ENCODE measurements at regions of chr5 and their contacts with region 1.

Region 1: DNA sequence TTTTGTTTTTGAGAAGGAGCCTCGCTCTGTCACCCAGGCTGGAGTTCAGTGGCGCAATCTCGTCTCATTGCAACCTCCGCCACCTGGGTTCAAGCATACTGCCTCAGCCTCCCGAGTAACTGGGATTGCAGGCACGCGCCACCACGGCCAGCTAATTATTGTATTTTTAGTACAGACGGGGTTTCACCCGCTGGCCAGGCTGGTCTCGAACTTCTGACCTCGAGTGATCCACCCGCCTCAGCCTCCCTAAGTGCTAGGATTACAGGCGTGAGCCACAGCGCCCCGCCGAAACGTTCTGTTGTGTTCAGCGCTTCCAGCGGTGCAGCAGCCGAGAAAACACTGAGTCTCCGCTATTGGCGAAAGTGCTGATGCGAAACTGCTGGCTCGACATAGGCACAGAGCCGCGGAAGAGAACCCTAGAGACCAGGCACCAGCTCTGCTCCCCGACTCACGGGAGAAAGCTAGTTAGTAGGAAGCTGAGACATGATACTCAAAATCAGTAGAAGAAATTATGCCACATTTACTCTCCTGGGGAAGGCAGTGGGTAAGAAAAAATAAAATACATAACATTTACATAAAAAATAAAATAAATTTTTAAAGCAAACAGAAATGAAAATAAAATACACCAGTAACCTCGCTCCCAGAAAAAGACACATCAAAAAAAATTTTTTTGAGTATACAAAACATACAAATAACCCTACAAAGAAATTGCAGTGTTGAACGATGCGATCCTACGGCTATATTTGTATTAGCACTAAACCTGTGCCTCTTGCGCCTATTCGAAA is 31.6 kb downstream of the ANXA2R start:
- DNase-seq: peak; percentile 86
- H3K4me3 Mint-ChIP-seq: peak overlapping the region; percentile 90
- H3K27ac Mint-ChIP-seq: peak overlapping the region; percentile 96
- H3K4me1 Mint-ChIP-seq: peaks cover 41% of the 10 kb centered on the region
- H3K27me3 Mint-ChIP-seq: no peaks in the 10 kb centered on the region

Region 2: DNA sequence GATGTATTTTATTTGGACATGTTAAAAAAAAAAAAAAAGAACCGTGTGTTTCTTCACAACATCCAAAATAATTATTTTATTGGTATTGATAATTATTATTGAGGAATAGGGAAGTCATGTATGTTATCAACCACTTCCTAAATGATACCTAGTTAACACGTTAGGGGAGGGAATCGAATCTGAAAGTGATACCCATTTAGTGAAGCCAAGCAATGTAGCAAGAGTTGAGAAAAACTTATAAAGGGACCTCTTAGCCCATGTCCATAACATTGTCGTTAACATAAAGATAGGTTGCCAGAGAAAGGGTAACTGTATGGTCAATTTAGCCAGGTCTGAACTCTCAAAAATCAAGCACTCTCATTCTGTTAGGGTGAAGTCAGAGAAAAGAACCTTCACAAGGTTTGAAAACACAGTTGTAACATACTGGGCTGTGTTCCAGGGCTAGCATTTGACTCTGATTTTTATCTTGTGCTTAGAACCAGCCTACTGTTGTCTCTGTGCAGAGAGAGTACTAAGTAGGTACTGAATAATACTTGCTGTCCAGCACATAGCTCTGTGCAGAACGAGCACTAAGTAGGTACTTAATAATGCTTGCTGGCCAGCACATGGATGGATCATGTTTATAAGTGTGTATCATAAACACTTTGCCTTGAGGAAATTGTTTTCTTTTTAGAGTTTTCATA is 524.9 kb before region 1 on chr5:
- intact Hi-C with region 1: no loop called
- DNase-seq: no peak
- H3K4me3 Mint-ChIP-seq: no peak overlapping the region
- H3K27ac Mint-ChIP-seq: no peak overlapping the region
- H3K4me1 Mint-ChIP-seq: no peaks in the 10 kb centered on the region
- H3K27me3 Mint-ChIP-seq: no peaks in the 10 kb centered on the region

Region 3: GRCh38 chr5:42950440-42951292 is 57.9 kb before region 1 on chr5:
- intact Hi-C with region 1: loop called (anchors 1 kb)
- DNase-seq: peak; percentile 60
- H3K4me3 Mint-ChIP-seq: peak overlapping the region; percentile 88
- H3K27ac Mint-ChIP-seq: peak overlapping the region; percentile 97
- H3K4me1 Mint-ChIP-seq: peaks cover 37% of the 10 kb centered on the region
- H3K27me3 Mint-ChIP-seq: peaks cover 8% of the 10 kb centered on the region

Region 4: GRCh38 chr5:43019614-43020293 is 11.2 kb after region 1 on chr5:
- intact Hi-C with region 1: loop called (anchors 1 kb)
- DNase-seq: peak; percentile 83
- H3K4me3 Mint-ChIP-seq: peak overlapping the region; percentile 90
- H3K27ac Mint-ChIP-seq: peak overlapping the region; percentile 97
- H3K4me1 Mint-ChIP-seq: peaks cover 43% of the 10 kb centered on the region
- H3K27me3 Mint-ChIP-seq: no peaks in the 10 kb centered on the region

Region 5: DNA sequence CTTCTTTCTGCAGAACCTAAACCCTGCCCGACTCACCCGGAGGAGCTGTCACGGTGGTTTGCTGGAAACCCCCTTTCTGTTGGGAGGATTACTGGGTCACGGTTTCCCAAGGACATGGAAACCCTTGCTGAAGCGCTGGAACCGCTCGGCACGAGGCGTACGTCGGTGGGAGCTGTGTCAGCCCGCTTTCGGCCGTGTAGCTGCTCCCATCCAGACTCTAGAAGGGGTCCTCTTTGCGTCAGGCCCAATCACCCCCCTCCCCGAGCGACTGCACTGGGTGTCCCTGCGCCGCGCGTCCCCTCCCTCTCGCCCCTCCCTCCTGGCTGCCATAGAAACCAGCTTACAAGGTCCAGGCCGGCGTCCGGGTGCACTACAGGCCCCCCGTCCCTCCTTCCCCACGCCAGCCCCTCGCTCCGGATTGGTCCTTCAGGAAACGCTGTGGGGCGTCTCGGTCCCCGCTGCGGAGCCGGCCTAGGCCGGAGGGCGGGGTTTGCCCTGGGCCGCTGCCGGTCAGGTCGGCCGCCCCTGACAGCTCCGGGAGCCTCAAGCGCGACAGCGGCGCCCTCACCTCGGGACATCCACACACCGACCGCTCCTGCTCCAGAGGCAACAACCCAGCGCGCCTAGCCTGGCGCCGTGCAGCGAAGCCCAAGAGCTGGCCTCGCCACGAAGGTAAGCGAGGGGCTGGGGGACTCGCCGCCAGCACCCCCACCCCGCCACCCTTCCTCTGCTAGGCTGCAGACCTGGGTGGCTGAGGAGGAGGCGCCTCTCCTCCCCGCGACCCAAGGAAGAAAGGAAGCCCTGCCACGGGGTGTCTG is 183.4 kb after region 1 on chr5 and contains the start of gene NIM1K:
- intact Hi-C with region 1: loop called (anchors 5 kb)
- DNase-seq: peak; percentile 39
- H3K4me3 Mint-ChIP-seq: peak within 1 kb of the TSS; percentile 85
- H3K27ac Mint-ChIP-seq: peak within 1 kb of the TSS; percentile 89
- H3K4me1 Mint-ChIP-seq: peaks cover 40% of the 10 kb centered on the region
- H3K27me3 Mint-ChIP-seq: peaks cover 22% of the 10 kb centered on the region
- total RNA-seq, gene NIM1K: 0.39 and 0.67 TPM in 2 replicates

Region 6: GRCh38 chr5:43602461-43603343 is 594.1 kb after region 1 on chr5 and contains the start of gene NNT:
- intact Hi-C with region 1: loop called (anchors 5 kb)
- DNase-seq: peak; percentile 76
- H3K4me3 Mint-ChIP-seq: peak within 1 kb of the TSS; percentile 91
- H3K27ac Mint-ChIP-seq: peak within 1 kb of the TSS; percentile 91
- H3K4me1 Mint-ChIP-seq: peaks cover 34% of the 10 kb centered on the region
- H3K27me3 Mint-ChIP-seq: no peaks in the 10 kb centered on the region
- total RNA-seq, gene NNT: 43.6 and 47.5 TPM in 2 replicates